Mammary epithelial cell (primary cell): ENCODE measurements at regions of chr15 and their contacts with region 1.

Region 1: DNA sequence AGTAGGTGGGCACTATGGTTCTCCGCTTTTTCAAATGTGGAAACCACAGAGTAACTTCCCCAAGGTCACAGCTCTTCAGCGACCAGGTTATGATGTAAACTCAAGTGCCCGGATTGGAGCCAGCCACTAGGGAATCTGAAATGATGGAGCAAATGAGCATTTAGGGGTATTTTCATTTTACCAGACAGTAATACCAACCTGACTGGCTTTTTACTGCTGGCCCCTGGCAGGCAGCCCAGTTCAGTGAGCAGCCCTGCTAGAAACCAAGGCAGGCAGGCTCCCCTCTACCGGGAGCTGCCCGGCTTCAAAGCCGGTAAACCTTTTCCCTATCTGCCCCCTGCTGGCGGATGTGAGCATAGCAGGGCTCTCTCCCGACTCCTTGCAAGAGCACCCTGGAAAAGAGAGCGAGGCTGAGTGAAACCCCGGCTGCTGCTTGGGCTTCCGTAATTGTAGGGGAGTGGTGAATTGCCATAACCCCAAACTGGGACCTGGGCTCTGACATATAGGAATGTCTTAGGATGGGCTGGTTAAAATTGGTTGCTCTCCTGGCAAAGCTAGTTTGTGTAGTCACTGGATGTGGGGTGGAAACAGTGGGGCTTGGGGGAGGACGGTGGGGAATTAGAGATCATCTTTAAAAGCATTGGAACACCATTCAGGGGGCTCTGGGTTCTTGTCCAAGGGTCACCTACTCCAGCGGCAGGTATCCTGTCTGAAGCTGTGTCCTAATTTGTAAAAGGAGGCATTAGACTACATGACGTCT is 98.0 kb upstream of the TNFAIP8L3 start:
- DNase-seq: peak; percentile 83
- H3K4me3 ChIP-seq: no peak overlapping the region
- H3K27ac ChIP-seq: no peak overlapping the region
- H3K4me1 ChIP-seq: peaks cover 29% of the 10 kb centered on the region
- H3K27me3 ChIP-seq: no peaks in the 10 kb centered on the region
- CTCF ChIP-seq: peak; percentile 75 to 96

Region 2: GRCh38 chr15:50940506-50940905 is 252.2 kb before region 1 on chr15:
- CTCF ChIA-PET with region 1: no interaction called
- dilution Hi-C with region 1: no loop called
- in situ Hi-C with region 1: no loop called
- intact Hi-C with region 1: loop called (anchors 2 kb)
- DNase-seq: peak; percentile 15
- H3K4me3 ChIP-seq: no peak overlapping the region
- H3K27ac ChIP-seq: no peak overlapping the region
- H3K4me1 ChIP-seq: no peaks in the 10 kb centered on the region
- H3K27me3 ChIP-seq: no peaks in the 10 kb centered on the region
- CTCF ChIP-seq: no peak

Region 3: GRCh38 chr15:51132384-51133139 is 60.1 kb before region 1 on chr15:
- CTCF ChIA-PET with region 1: interaction called, 8 read pairs
- dilution Hi-C with region 1: no loop called
- in situ Hi-C with region 1: no loop called
- intact Hi-C with region 1: loop called (anchors 1 kb)
- DNase-seq: peak; percentile 72
- H3K4me3 ChIP-seq: no peak overlapping the region
- H3K27ac ChIP-seq: peak overlapping the region; percentile 6
- H3K4me1 ChIP-seq: peaks cover 33% of the 10 kb centered on the region
- H3K27me3 ChIP-seq: no peaks in the 10 kb centered on the region
- CTCF ChIP-seq: peak; percentile 93 to 97